HEK293T (cell line): ENCODE measurements at regions of chr15 and their contacts with region 1.

Region 1: GRCh38 chr15:79596051-79596507 is 163.9 kb downstream of the MINAR1 start:
- DNase-seq: peak; percentile 95

Region 2: DNA sequence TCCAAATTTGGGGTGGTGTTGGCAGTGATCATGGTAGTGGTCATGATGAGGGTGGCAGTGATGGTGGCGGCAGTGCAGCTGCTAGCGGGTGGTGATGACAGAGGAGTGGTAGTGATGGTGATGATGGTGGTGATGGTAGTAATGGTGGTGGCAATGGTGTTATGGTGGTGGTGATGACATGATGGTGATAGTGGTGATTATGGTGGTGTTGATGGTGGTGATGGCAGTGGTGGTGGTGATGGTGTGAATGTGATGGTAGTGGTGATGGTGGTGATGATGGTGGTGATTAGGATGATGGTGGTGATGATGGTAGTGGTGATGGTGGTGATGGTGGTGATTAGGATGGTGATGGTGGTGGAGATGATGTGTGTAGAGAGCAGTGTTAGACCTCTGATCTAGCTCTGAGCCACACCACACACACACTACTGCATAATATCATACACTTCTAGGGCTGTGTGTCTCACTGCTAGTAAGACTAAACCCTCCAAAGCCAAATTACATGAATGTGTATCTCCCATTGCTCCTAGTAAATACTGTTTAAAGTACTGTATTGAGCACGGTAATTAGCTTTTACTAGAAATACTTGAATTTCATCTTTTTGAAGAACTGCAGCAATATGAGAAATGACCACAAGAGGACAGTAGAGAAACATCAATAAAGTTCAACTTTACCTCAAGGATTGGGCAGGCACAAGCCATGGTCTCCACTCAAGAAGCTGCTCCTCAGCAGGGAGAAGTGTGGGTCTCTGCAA is 256.3 kb before region 1 on chr15:
- CTCF ChIA-PET with region 1: interaction called, 12 read pairs
- POLR2A ChIA-PET with region 1: no interaction called
- DNase-seq: peak; percentile 54

Region 3: GRCh38 chr15:79380755-79381497 is 215.2 kb before region 1 on chr15:
- CTCF ChIA-PET with region 1: interaction called, 66 read pairs
- POLR2A ChIA-PET with region 1: no interaction called
- DNase-seq: peak; percentile 75

Region 4: DNA sequence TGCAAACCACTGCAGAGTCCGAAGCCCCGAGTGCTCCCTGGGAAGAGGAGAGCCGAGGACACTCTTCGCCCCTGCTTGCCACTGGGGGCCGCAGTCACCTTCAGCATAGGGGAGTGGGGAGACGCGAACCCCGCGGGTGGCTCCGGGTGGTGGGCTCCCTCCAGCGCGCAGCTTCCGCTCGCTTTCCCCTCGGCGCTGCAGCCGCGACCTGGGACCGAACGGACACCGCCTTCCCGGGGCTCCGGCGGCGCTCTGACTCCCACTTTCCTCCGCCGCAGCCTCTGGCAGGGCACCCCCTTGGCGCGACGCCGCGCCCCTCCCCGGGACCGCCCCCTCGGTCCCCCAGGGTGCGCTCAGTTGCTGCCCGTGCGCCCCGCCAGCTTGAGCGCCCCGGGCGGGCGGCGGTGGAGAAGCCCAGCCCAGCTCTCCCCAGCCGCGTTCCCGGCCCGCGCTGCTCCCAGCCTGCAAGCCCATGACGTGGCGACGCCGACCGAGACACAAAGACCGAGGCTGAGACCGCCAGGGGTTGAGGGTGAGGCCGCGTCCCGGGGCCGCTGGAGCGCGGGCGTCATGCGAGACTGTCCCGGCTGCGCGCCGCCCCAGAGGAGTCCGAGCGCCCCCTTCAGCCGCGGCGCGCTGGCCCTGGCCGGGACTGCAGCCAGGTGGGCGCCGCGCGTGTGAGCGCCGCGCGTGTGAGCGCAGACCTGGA is 164.3 kb before region 1 on chr15 and contains the start of gene MINAR1:
- CTCF ChIA-PET with region 1: interaction called, 13 read pairs
- POLR2A ChIA-PET with region 1: no interaction called
- DNase-seq: peak; percentile 68

Region 5: DNA sequence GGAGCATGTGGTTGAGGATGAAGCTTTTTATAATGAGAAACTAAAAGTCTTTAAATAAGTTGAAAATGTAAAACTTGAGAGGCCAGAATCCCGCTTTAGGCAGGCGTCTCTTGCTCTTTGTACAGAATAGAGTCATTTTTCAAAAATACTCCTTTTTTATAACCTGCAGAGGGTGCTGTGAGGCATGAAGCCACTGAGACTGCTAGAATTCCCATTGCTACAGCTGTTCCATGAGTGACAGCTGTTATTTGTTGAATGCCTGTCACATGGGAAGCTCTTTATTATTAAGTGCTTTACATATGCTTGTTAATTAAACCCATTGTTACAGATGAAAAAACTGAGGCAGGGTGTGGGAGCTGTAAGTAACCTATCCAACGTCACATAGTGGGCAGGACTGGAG is 145.4 kb before region 1 on chr15:
- CTCF ChIA-PET with region 1: interaction called, 11 read pairs
- POLR2A ChIA-PET with region 1: no interaction called
- DNase-seq: no peak

Region 6: GRCh38 chr15:79887054-79887915 is 291.2 kb after region 1 on chr15:
- CTCF ChIA-PET with region 1: no interaction called
- POLR2A ChIA-PET with region 1: no interaction called
- DNase-seq: no peak